Caco-2 (cell line): ENCODE measurements at regions of chr22 and their contacts with region 1.

Region 1: GRCh38 chr22:40346178-40347118 is at the start of gene ADSL:
- DNase-seq: peak; percentile 87 to 91
- H3K4me3 ChIP-seq: peak within 1 kb of the TSS; percentile 90
- H3K4me3 Mint-ChIP-seq: peak within 1 kb of the TSS; percentile 95
- H3K27ac Mint-ChIP-seq: peak within 1 kb of the TSS; percentile 93
- H3K4me1 ChIP-seq: peaks cover 9% of the 10 kb centered on the region
- H3K4me1 Mint-ChIP-seq: peaks cover 9% of the 10 kb centered on the region
- H3K27me3 ChIP-seq: no peaks in the 10 kb centered on the region
- H3K27me3 Mint-ChIP-seq: no peaks in the 10 kb centered on the region
- CTCF ChIP-seq: no peak
- total RNA-seq, gene ADSL: 120 and 123 TPM in 2 replicates

Region 2: DNA sequence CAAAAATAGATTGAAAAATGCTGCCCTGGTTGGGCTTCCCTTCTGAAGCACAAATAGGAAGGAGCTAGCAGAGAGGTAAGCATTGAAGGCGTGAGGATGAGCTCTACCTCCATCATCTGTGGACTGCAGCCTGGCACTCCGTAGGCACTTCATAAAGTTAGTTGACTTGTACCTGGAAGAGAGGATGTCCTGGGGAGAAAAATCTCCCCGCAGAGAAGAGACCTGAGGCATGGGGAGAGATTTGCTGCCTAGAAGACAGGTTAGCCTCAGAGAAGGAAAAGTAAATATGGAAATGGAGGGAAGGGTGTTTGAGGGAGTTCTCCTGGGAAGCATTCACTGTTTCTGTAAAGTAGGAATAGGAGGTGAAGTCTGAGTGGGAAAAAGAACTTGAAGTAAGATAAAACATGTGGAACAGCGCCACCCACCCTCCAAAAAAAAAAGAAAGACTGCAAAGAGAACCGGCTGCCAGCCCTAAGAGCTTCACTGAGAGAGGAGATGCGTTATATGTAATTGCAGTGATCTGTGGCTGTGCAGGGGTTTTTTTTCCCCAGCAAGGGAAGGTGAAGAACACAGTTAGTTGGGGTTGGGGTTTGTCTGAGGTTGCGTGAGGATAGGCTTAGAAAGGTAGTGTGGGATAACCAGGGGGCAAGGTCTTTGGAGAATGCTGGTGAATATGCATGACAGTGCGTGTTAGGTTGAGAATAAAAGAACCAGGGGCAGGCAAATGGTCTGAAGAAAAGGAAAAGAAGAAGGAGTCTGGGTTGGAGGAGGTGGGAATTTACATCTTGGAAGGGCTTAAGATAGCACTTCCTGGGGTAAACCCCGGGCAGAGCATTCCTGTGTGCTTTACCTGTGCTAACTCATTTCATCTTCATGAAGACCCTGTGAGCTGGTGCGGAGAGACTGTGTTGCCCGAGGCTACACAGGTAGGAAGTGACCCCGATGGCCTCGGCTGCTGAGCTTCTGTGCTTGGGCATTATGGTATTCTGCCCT is 152.7 kb before region 1 on chr22:
- CTCF ChIA-PET with region 1: interaction called, 6 read pairs
- POLR2A ChIA-PET with region 1: no interaction called
- intact Hi-C with region 1: loop called (anchors 10 kb)
- DNase-seq: peak in 1 of 2 experiments; percentile 33
- H3K4me3 ChIP-seq: no peak overlapping the region
- H3K4me3 Mint-ChIP-seq: no peak overlapping the region
- H3K27ac Mint-ChIP-seq: no peak overlapping the region
- H3K4me1 ChIP-seq: 0 out of 2 replicates have a peak, but pooled peaks cover 5% of the 10 kb centered on the region
- H3K4me1 Mint-ChIP-seq: peaks cover 13% of the 10 kb centered on the region
- H3K27me3 ChIP-seq: no peaks in the 10 kb centered on the region
- H3K27me3 Mint-ChIP-seq: no peaks in the 10 kb centered on the region
- CTCF ChIP-seq: peak; percentile 39 to 43

Region 3: DNA sequence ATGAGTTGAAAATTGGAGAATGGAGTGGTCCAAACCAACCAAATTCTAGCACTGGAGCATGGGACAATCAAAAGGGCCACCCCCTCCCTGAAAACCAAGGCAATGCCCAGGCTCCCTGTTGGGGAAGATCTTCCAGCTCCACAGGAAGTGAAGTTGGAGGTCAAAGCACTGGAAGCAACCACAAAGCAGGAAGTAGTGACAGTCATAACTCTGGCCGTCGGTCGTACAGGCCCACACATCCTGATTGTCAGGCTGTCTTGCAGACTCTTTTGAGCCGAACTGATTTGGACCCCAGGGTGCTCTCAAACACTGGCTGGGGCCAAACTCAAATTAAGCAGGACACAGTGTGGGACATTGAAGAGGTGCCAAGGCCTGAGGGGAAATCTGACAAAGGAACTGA is 80.7 kb before region 1 on chr22:
- CTCF ChIA-PET with region 1: no interaction called
- POLR2A ChIA-PET with region 1: no interaction called
- intact Hi-C with region 1: no loop called
- DNase-seq: no peak
- H3K4me3 ChIP-seq: no peak overlapping the region
- H3K4me3 Mint-ChIP-seq: no peak overlapping the region
- H3K27ac Mint-ChIP-seq: no peak overlapping the region
- H3K4me1 ChIP-seq: no peaks in the 10 kb centered on the region
- H3K4me1 Mint-ChIP-seq: no peaks in the 10 kb centered on the region
- H3K27me3 ChIP-seq: no peaks in the 10 kb centered on the region
- H3K27me3 Mint-ChIP-seq: no peaks in the 10 kb centered on the region
- CTCF ChIP-seq: no peak

Region 4: DNA sequence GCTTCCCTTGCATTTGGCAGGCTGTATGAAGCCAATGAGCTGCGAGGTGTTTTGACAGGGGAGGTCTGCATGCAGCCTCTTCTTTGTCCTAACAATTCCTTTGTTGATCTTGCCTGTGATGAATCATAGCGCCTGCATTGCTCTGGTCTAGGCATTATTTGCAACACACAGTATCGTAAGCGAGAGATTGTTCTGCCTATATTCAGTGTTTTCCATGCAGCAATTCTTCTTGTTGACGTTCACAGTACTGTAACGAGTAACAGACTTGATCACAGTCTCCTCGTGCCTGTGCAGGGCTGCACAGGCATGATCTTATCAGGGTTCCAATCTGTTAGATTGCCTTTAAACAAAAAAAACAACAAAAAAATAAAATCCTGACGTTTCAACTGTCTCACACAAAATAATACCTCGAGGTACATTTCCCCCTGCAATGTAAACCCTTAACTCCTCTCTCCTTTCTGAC is 14.1 kb before region 1 on chr22:
- CTCF ChIA-PET with region 1: no interaction called
- POLR2A ChIA-PET with region 1: no interaction called
- intact Hi-C with region 1: no loop called
- DNase-seq: no peak
- H3K4me3 ChIP-seq: no peak overlapping the region
- H3K4me3 Mint-ChIP-seq: no peak overlapping the region
- H3K27ac Mint-ChIP-seq: no peak overlapping the region
- H3K4me1 ChIP-seq: no peaks in the 10 kb centered on the region
- H3K4me1 Mint-ChIP-seq: peaks cover 9% of the 10 kb centered on the region
- H3K27me3 ChIP-seq: no peaks in the 10 kb centered on the region
- H3K27me3 Mint-ChIP-seq: no peaks in the 10 kb centered on the region
- CTCF ChIP-seq: no peak

Region 5: DNA sequence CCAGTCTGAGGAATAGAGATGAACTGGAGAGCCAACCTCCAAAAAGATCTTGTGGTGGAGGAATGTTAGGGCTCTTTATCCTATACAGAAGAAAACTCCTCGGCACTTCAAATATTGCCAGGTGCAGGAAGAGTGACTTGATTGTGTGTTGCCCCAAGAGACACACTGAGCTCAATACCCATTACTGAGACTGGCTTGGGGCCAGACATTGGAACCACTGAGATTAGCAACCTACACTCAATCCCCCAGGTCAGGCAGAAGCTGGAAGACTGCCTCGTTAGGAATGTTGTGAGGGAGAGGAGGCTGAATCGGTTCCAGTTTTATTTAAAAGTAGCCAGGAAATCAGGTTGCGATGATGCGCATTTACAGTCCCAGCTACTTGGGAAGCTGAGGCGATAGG is 21.6 kb after region 1 on chr22:
- CTCF ChIA-PET with region 1: interaction called, 3 read pairs
- POLR2A ChIA-PET with region 1: no interaction called
- intact Hi-C with region 1: loop called (anchors 2 kb)
- DNase-seq: no peak
- H3K4me3 ChIP-seq: no peak overlapping the region
- H3K4me3 Mint-ChIP-seq: no peak overlapping the region
- H3K27ac Mint-ChIP-seq: no peak overlapping the region
- H3K4me1 ChIP-seq: no peaks in the 10 kb centered on the region
- H3K4me1 Mint-ChIP-seq: peaks cover 2% of the 10 kb centered on the region
- H3K27me3 ChIP-seq: no peaks in the 10 kb centered on the region
- H3K27me3 Mint-ChIP-seq: no peaks in the 10 kb centered on the region
- CTCF ChIP-seq: no peak